K562 (cell line): ENCODE measurements at regions of chr3 and their contacts with region 1.

Region 1: DNA sequence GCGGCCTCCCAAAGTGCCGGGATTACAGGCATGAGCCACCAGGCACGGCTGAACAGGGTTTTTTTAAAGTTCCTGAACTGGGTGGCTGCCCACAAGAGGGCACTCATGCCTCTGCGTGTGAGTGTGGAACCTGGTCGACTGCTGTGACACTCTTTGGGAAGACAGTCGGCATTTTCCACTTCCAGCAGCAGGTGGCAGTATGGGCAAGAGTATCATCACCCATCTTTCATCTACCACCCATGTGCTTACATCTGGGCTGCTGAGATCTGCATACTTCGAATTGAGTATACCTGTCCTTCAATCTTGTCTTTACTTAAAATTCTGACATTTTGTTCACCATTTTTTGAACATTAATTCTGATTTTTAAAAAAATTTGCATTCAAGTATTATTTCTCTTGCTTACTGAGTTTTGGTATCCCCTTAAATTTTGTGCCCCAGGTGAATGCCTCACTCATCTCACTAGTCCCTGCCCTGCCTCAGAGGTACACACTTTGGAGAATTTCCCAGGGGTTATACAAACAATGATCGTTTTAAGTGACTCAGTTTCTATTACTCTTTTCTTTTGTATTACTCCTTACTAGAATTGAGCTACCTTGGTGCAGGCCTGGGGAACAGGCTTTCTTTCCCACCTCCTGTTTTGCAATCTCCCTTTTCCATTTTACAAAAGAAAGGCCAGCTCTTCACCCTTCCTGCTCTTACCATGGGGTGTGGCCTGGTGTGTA is 11.8 kb downstream of the CLEC3B start:
- DNase-seq: peak; percentile 94 to 97 (median 95)
- ATAC-seq: peak; percentile 92
- H3K4me3 ChIP-seq: no peak overlapping the region
- H3K27ac ChIP-seq: no peak overlapping the region
- H3K4me1 ChIP-seq: peaks cover 9 to 19% of the 10 kb centered on the region in 2 experiments
- H3K27me3 ChIP-seq: peaks cover 3 to 14% of the 10 kb centered on the region in 2 experiments; a peak in 4 of 5 replicates
- CTCF ChIP-seq: peak; percentile 99
- EP300 ChIP-seq: no peak
- POLR2A ChIP-seq: no peak
- RAD21 ChIP-seq: peak; percentile 99 to 100

Region 2: GRCh38 chr3:44913868-44914468 is 123.9 kb before region 1 on chr3:
- CTCF ChIA-PET with region 1: no interaction called
- POLR2A ChIA-PET with region 1: no interaction called
- in situ Hi-C with region 1: no loop called
- intact Hi-C with region 1: no loop called
- DNase-seq: peak; percentile 81 to 85 (median 82)
- ATAC-seq: peak; percentile 93
- H3K4me3 ChIP-seq: no peak overlapping the region
- H3K27ac ChIP-seq: no peak overlapping the region
- H3K4me1 ChIP-seq: no peaks in the 10 kb centered on the region
- H3K27me3 ChIP-seq: peaks cover 0 to 5% of the 10 kb centered on the region in 2 experiments; a peak in 1 of 5 replicates
- CTCF ChIP-seq: peak; percentile 88 to 92 (median 90)
- EP300 ChIP-seq: no peak
- POLR2A ChIP-seq: no peak
- RAD21 ChIP-seq: peak; percentile 51 to 87

Region 3: GRCh38 chr3:45167011-45167911 is 129.4 kb after region 1 on chr3:
- CTCF ChIA-PET with region 1: interaction called, 20 read pairs
- POLR2A ChIA-PET with region 1: interaction called, 4 read pairs
- in situ Hi-C with region 1: no loop called
- intact Hi-C with region 1: loop called (anchors 1 kb)
- DNase-seq: peak; percentile 87 to 96 (median 88)
- ATAC-seq: peak; percentile 95
- H3K4me3 ChIP-seq: no peak overlapping the region
- H3K27ac ChIP-seq: peak overlapping the region; percentile 59
- H3K4me1 ChIP-seq: peaks cover 12 to 59% of the 10 kb centered on the region in 2 experiments
- H3K27me3 ChIP-seq: no peaks in the 10 kb centered on the region
- CTCF ChIP-seq: peak in 2 of 3 experiments; percentile 3 to 11; a peak in 1 of 6 replicates
- EP300 ChIP-seq: peak; percentile 53; the same call in 1 of the 2 replicates
- POLR2A ChIP-seq: peak; percentile 75
- RAD21 ChIP-seq: peak in 1 of 2 experiments; percentile 48; a peak in 3 of 4 replicates

Region 4: GRCh38 chr3:45343947-45344346 is 306.1 kb after region 1 on chr3:
- CTCF ChIA-PET with region 1: interaction called, 7 read pairs
- POLR2A ChIA-PET with region 1: no interaction called
- in situ Hi-C with region 1: loop called (anchors 5 kb)
- intact Hi-C with region 1: loop called (anchors 1 kb)
- DNase-seq: peak; percentile 71 to 88 (median 74)
- ATAC-seq: peak; percentile 98
- H3K4me3 ChIP-seq: no peak overlapping the region
- H3K27ac ChIP-seq: no peak overlapping the region
- H3K4me1 ChIP-seq: no peaks in the 10 kb centered on the region
- H3K27me3 ChIP-seq: peaks cover 15 to 20% of the 10 kb centered on the region in 2 experiments; a peak in 4 of 5 replicates
- CTCF ChIP-seq: peak; percentile 46 to 66 (median 63); a peak in 5 of 6 replicates
- EP300 ChIP-seq: no peak
- POLR2A ChIP-seq: no peak
- RAD21 ChIP-seq: peak; percentile 29 to 70; a peak in 3 of 4 replicates

Region 5: GRCh38 chr3:45656575-45657363 is 618.9 kb after region 1 on chr3:
- CTCF ChIA-PET with region 1: interaction called, 18 read pairs
- POLR2A ChIA-PET with region 1: no interaction called
- in situ Hi-C with region 1: loop called (anchors 5 kb)
- intact Hi-C with region 1: loop called (anchors 2 kb)
- DNase-seq: peak; percentile 86 to 96 (median 88)
- ATAC-seq: peak; percentile 95
- H3K4me3 ChIP-seq: no peak overlapping the region
- H3K27ac ChIP-seq: no peak overlapping the region
- H3K4me1 ChIP-seq: 0 out of 5 replicates have a peak, but pooled peaks cover 0 to 3% of the 10 kb centered on the region in 2 experiments
- H3K27me3 ChIP-seq: no peaks in the 10 kb centered on the region
- CTCF ChIP-seq: peak; percentile 96 to 99 (median 98)
- EP300 ChIP-seq: no peak
- POLR2A ChIP-seq: no peak
- RAD21 ChIP-seq: peak; percentile 96 to 98

Region 6: DNA sequence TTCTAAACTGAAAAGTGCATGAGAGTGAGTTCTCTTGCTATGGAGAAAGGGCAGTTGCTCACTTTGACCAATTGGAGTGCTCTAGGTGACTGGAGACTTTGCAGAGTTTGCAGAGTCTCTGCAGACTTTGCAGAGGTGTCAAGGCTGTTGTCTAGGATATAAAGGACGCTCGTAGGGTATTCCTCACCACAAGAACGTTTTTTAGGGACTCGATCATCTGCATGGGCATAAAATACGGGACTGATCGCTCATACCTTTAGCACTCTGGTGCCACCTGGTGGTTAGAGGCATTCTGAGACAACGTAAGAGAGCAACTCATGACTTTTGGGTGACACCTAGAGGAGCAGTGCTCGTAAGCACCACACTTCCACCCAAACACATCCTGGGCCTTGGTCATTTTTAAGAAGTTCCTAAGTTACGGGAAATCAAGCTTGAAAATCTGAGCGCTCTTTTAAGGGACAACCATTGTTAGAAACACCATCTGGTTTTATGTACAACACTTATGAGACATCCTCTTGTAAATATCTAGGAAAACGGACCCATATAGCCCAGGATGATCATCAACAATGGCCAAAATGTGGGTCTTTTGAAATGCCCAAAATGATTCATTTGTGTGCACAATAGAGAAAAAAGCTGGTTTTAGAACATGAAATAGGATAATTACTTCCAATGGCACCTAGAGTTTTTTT is 1041.0 kb after region 1 on chr3:
- CTCF ChIA-PET with region 1: interaction called, 23 read pairs
- POLR2A ChIA-PET with region 1: no interaction called
- in situ Hi-C with region 1: loop called (anchors 10 kb)
- intact Hi-C with region 1: loop called (anchors 5 kb)
- DNase-seq: peak; percentile 86 to 94 (median 88)
- ATAC-seq: peak; percentile 100
- H3K4me3 ChIP-seq: no peak overlapping the region
- H3K27ac ChIP-seq: no peak overlapping the region
- H3K4me1 ChIP-seq: no peaks in the 10 kb centered on the region; a peak in 1 of 5 replicates
- H3K27me3 ChIP-seq: peaks cover 0 to 3% of the 10 kb centered on the region in 2 experiments; a peak in 2 of 5 replicates
- CTCF ChIP-seq: peak; percentile 100
- EP300 ChIP-seq: no peak
- POLR2A ChIP-seq: no peak
- RAD21 ChIP-seq: peak; percentile 100

Region 7: GRCh38 chr3:46406788-46407611 is 1369.1 kb after region 1 on chr3 and contains the starts of genes CCR5AS and CCRL2:
- CTCF ChIA-PET with region 1: no interaction called
- POLR2A ChIA-PET with region 1: no interaction called
- in situ Hi-C with region 1: loop called (anchors 25 kb)
- intact Hi-C with region 1: no loop called
- DNase-seq: peak; percentile 93 to 99 (median 96)
- ATAC-seq: peak; percentile 93
- H3K4me3 ChIP-seq: peak within 1 kb of the TSS; percentile 35
- H3K27ac ChIP-seq: peak within 1 kb of the TSS; percentile 88
- H3K4me1 ChIP-seq: peaks cover 25 to 39% of the 10 kb centered on the region in 2 experiments
- H3K27me3 ChIP-seq: no peaks in the 10 kb centered on the region
- CTCF ChIP-seq: no peak
- EP300 ChIP-seq: peak; percentile 94
- POLR2A ChIP-seq: peak; percentile 68
- RAD21 ChIP-seq: no peak; a peak in 1 of 4 replicates
- polyA plus RNA-seq, gene CCRL2: 4.3 to 5.7 TPM